T-cell (primary cell): ENCODE measurements at regions of chr10 and their contacts with region 1.

Region 1: DNA sequence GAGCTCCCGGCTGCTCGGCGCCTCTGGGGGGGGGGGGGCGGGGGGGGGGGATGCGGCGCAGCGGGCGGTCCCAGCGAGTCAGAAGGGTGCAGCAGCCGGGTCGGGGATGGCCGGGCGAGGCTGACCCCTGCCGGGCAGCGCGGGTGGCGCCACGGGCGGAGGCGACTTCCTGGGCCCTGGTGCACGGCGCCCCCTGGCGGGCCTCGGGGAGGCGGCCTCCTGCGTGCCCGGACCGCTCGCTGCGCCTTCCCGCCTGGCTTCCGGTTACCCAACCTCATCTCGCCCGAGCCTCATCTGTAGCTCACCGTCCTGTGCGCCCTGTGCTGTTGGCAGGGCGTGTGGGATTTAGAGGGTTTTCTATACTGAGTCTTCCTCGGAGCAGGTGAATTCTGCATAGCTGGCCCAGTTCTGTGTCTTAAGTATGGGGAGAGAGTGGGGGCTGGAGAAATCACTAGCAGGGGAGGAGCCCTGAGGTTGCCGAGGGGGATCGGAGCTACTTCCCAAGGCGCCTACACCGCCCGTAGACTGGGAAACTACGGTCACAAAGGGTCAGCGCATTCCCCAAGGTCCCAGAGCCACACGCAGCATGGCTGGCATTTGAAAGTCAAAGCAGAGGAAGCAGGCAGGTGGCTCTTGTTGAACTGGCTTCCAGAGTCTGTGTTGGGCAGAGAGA is 28.3 kb upstream of the WDFY4 start:
- DNase-seq: peak; percentile 51 to 88 (median 74)
- ATAC-seq: peak; percentile 91 to 95 (median 92)
- H3K4me3 ChIP-seq: peak overlapping the region; percentile 35 to 36
- H3K4me3 Mint-ChIP-seq: peak overlapping the region; percentile 75 to 81 (median 76)
- H3K27ac ChIP-seq: no peak overlapping the region
- H3K27ac Mint-ChIP-seq: peak overlapping the region in 1 of 2 donors; percentile 66
- H3K4me1 ChIP-seq: peaks cover 0 to 17% of the 10 kb centered on the region in 2 experiments
- H3K4me1 Mint-ChIP-seq: peaks cover 8 to 13% (median 8%) of the 10 kb centered on the region in 3 donors
- H3K27me3 ChIP-seq: peaks cover 0 to 39% of the 10 kb centered on the region in 2 experiments
- H3K27me3 Mint-ChIP-seq: peaks cover 18 to 32% of the 10 kb centered on the region in 2 donors

Region 2: GRCh38 chr10:48363617-48364355 is 292.6 kb before region 1 on chr10:
- CTCF ChIA-PET with region 1: interaction called, 9 to 11 read pairs
- POLR2A ChIA-PET with region 1: no interaction called
- DNase-seq: peak in 15 of 35 experiments; percentile 1 to 61 (median 10)
- ATAC-seq: peak in 3 of 4 experiments; percentile 38 to 54 (median 46)
- H3K4me3 ChIP-seq: no peak overlapping the region
- H3K4me3 Mint-ChIP-seq: no peak overlapping the region
- H3K27ac ChIP-seq: no peak overlapping the region
- H3K27ac Mint-ChIP-seq: no peak overlapping the region
- H3K4me1 ChIP-seq: peaks cover 0 to 5% of the 10 kb centered on the region in 2 experiments
- H3K4me1 Mint-ChIP-seq: peaks cover 28 to 42% (median 36%) of the 10 kb centered on the region in 3 donors
- H3K27me3 ChIP-seq: no peaks in the 10 kb centered on the region
- H3K27me3 Mint-ChIP-seq: no peaks in the 10 kb centered on the region

Region 3: DNA sequence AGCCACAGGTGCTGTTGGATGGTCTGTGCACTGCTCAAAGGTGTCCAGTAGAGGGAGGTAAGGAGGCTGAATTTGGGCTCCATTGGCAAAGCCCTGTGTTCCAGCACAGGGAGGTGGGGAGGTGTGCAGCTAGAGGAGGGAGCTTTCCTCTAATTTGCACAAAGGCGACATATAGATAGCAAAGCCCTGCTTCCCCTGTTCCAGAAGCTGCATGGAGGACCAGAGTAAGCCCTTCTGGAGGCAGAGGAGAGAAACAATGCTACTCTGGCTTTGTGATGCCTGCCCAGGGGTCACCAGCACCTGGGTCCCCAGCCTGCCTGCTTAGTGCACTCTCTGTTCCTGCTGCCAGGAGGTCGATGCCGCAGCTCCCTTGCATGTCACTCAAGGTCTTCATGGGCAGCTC is 48.1 kb before region 1 on chr10:
- CTCF ChIA-PET with region 1: interaction called, 3 to 13 read pairs
- POLR2A ChIA-PET with region 1: no interaction called
- DNase-seq: peak in 7 of 35 experiments; percentile 4 to 41 (median 15)
- ATAC-seq: peak; percentile 45 to 61 (median 54)
- H3K4me3 ChIP-seq: no peak overlapping the region
- H3K4me3 Mint-ChIP-seq: no peak overlapping the region
- H3K27ac ChIP-seq: no peak overlapping the region
- H3K27ac Mint-ChIP-seq: no peak overlapping the region
- H3K4me1 ChIP-seq: peaks cover 0 to 3% of the 10 kb centered on the region in 2 experiments
- H3K4me1 Mint-ChIP-seq: peaks cover 4 to 8% (median 7%) of the 10 kb centered on the region in 3 donors
- H3K27me3 ChIP-seq: peaks cover 8 to 51% of the 10 kb centered on the region in 2 experiments
- H3K27me3 Mint-ChIP-seq: peaks cover 50 to 53% of the 10 kb centered on the region in 2 donors